Naive thymus-derived CD8-positive, alpha-beta T cell (primary cell): ENCODE measurements at regions of chr7 and their contacts with region 1.

Region 1: DNA sequence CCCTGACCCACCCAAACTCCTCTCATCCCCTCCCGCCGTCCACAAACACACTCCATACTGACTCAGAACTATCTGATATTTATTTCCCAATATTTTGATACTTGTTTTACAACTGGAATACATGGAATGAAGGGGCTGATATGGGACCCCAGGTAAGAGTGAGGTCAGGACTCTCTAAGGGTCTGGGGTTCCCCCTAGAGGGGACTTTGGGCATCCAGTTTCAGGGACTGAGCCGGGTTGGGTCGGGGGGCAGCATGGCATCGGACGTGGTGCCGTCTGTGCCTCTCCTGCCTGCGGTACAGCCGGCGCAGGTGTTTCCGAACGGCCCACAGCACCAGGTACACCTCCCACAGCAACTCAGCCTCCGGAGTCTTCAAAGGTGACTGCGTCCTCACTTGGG is 7.5 kb downstream of the SPACDR start:
- DNase-seq: no peak
- ATAC-seq: no peak
- H3K4me3 Mint-ChIP-seq: no peak overlapping the region
- H3K27ac Mint-ChIP-seq: peak overlapping the region in 2 of 10 donors; percentile 15 to 71
- H3K4me1 Mint-ChIP-seq: peaks cover 3 to 20% (median 8%) of the 10 kb centered on the region in 4 donors
- H3K27me3 Mint-ChIP-seq: no peaks in the 10 kb centered on the region

Region 2: DNA sequence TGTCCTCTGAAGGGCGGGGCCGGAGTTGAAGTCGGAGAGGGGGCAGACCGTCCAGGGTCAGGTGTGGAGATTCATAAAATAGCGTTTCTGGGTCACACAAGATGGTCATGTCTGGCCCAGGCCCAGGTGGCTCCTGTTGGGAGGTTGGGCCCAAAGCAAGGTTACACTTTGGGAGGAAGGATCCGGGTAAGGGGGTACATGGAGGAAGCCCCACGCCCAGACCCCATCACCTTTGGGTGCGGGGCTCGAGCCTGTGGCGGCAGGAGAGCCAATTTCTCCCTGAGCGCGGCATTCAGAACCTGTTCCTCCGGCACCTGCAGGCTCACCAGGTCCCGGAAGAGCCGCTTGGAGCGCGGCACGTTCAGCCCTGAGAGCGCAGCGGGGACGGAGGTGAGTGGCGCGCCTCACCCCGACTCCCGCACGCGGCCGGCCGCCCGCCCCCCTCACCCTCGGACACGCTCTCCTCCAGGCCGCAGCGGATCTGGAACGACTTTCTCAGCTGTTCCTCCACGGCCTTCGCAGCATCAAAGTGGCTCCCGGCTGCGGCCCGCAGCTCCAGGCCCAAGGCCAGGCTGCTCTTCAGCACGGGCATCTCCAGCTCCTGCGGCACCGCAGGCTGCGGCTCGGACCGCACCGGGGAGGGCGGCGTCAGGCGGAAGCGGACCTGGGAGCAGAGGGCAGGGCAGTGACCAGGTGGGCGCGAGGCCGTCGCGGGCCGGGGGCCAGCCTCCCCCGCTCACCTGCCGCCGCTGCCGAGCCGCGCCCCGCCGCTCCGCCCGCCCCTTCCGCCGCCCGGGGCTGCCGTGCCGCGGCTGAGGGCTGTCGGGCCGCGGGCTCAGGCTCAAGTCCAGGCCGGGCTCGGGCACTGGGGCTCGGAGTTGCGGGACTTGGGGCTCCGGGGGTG is 20.9 kb before region 1 on chr7:
- POLR2A ChIA-PET with region 1: interaction called, 44 read pairs
- DNase-seq: peak in 9 of 10 donors; percentile 25 to 69 (median 49)
- ATAC-seq: peak; percentile 34 to 50
- H3K4me3 Mint-ChIP-seq: peak overlapping the region; percentile 85 to 97 (median 94)
- H3K27ac Mint-ChIP-seq: peak overlapping the region; percentile 84 to 98 (median 96)
- H3K4me1 Mint-ChIP-seq: peaks cover 18 to 50% (median 48%) of the 10 kb centered on the region in 4 donors
- H3K27me3 Mint-ChIP-seq: no peaks in the 10 kb centered on the region